Dorsolateral prefrontal cortex (tissue), 120 donors: ENCODE measurements at regions of chr6 and their contacts with region 1.

Region 1: DNA sequence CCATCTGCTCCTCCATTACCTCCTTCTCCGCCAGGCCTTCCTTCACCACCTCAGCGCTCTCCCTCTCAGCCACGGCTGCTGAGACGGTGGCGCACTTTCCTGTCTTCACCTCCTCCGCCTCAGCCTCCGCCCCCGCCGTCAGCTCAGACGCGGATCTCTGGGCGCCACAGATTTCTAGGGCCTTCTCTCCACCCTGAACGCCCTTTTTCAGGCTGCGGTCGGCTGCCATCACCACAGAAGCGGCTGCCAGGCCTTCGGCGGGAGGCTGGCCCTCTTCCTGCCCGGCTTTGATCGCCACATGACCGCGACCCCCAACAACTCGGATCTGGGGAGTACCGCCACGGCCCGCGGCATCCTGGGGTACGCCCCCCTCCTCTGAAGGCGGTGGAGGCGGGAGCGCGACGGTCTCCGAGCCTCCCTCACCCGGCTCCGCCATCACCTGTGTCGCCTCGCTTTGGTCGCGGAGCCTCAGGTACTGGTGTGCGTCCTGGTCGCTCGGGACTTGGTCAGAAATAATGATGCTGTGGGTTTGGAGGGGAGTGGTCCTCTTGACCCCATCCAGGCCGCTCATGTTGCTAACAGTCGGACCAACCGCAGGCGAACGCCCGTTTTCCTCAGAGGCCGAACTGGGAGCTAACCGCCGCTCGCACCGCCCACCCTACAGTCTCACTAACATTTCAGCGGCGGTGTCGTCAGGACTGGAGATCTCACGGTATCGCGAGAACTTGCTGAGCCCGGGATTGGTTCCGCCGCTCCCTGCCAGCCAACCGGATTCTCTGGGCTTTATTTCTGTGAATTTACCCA is at the start of gene TSPYL1:
- DNase-seq: peak; percentile 88 to 98 (median 96)
- H3K4me3 ChIP-seq: peak within 1 kb of the TSS; percentile 60 to 100 (median 94)
- H3K27ac ChIP-seq: peak within 1 kb of the TSS; percentile 65 to 100 (median 98)
- H3K27me3 ChIP-seq: no peaks in the 10 kb centered on the region
- CTCF ChIP-seq: peak in 16 of 56 donors; percentile 2 to 39 (median 22)
- total RNA-seq, gene TSPYL1: 121 to 538 (median 358) TPM

Region 2: GRCh38 chr6:116111552-116112528 is 167.6 kb before region 1 on chr6:
- intact Hi-C with region 1: loop called in 1 of 2 experiments (anchors 10 kb)
- DNase-seq: peak in 1 of 10 donors; percentile 34
- H3K4me3 ChIP-seq: no peak overlapping the region
- H3K27ac ChIP-seq: peak overlapping the region in 9 of 59 donors; percentile 0 to 58 (median 18)
- H3K27me3 ChIP-seq: no peaks in the 10 kb centered on the region
- CTCF ChIP-seq: peak in 46 of 56 donors; percentile 6 to 66 (median 40)

Region 3: GRCh38 chr6:116253505-116254296 is 25.8 kb before region 1 on chr6 and contains the start of gene TSPYL4:
- intact Hi-C with region 1: loop called in 1 of 2 experiments (anchors 1 kb)
- DNase-seq: peak; percentile 83 to 96 (median 95)
- H3K4me3 ChIP-seq: peak within 1 kb of the TSS; percentile 66 to 100 (median 95)
- H3K27ac ChIP-seq: peak within 1 kb of the TSS; percentile 56 to 99 (median 93)
- H3K27me3 ChIP-seq: no peaks in the 10 kb centered on the region
- CTCF ChIP-seq: peak in 5 of 56 donors; percentile 15 to 30 (median 28)
- total RNA-seq, gene TSPYL4: 69.8 to 228 (median 162) TPM

Region 4: GRCh38 chr6:116531675-116532570 is 252.5 kb after region 1 on chr6:
- intact Hi-C with region 1: loop called (anchors 5 to 10 kb)
- DNase-seq: peak in 5 of 10 donors; percentile 15 to 49 (median 39)
- H3K4me3 ChIP-seq: no peak overlapping the region
- H3K27ac ChIP-seq: no peak overlapping the region
- H3K27me3 ChIP-seq: peaks cover 0 to 5% (median 0%) of the 10 kb centered on the region in 45 donors
- CTCF ChIP-seq: peak; percentile 47 to 92 (median 82)

Region 5: GRCh38 chr6:116561377-116562018 is 282.0 kb after region 1 on chr6:
- intact Hi-C with region 1: loop called in 1 of 2 experiments (anchors 5 kb)
- DNase-seq: peak; percentile 64 to 92 (median 68)
- H3K4me3 ChIP-seq: peak overlapping the region in 38 of 59 donors; percentile 3 to 51 (median 26)
- H3K27ac ChIP-seq: no peak overlapping the region
- H3K27me3 ChIP-seq: no peaks in the 10 kb centered on the region
- CTCF ChIP-seq: peak; percentile 88 to 99 (median 96)

Region 6: DNA sequence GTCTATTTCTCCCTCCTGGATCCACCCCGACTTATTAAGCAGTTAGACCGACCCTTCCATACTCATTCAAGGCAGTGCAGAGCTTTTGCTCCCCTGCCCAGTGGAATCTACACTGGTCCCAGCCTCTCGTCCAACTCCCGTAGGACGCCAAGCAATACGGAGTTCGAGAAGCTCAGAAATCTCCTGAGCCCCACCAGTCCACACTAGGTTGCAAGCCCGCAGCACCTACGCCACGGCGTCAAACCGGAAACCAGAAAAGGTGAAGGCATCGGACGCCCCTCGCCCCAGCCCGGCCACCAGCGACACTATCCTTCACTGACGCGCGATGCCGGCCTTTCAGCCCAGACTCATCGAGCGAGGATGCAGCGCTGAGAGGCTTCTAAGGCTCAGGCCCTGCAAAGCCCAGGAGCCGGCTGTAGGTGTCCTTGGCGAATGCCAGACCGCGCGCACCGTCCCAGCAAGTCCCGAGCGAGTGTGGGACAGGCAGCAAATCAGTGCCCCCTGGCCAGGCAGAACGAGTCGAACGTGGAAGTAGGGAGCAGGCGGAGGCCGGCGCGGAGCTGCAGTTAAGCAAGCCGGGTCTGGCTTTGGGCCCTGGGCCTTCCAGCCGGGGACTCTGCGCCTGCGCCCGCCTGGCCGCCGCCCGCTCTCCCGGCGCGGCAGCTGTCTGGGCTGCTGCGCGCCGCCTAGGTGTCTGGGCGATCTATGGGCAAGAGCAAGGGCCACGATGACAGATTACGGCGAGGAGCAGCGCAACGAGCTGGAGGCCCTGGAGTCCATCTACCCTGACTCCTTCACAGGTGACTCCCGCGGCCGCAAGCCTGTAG is 291.6 kb after region 1 on chr6 and contains the start of gene RWDD1:
- intact Hi-C with region 1: loop called in 1 of 2 experiments (anchors 2 kb)
- DNase-seq: peak; percentile 95 to 99 (median 99)
- H3K4me3 ChIP-seq: peak within 1 kb of the TSS; percentile 64 to 99 (median 88)
- H3K27ac ChIP-seq: peak within 1 kb of the TSS in 58 of 59 donors; percentile 62 to 96 (median 86)
- H3K27me3 ChIP-seq: no peaks in the 10 kb centered on the region
- CTCF ChIP-seq: peak in 50 of 56 donors; percentile 4 to 68 (median 38)
- total RNA-seq, gene RWDD1: 25.9 to 50.3 (median 37.6) TPM